Activated CD4-positive, alpha-beta T cell treated with anti-CD3 and anti-CD28 coated beads for 36 hours (primary cell): ENCODE measurements at regions of chr2 and their contacts with region 1.

Region 1: GRCh38 chr2:27890146-27890923 is at the starts of genes BABAM2 and RBKS:
- DNase-seq: peak; percentile 94
- ATAC-seq: peak; percentile 87
- H3K4me3 Mint-ChIP-seq: peak within 1 kb of the TSS; percentile 99
- H3K27ac Mint-ChIP-seq: peak within 1 kb of the TSS; percentile 99
- H3K4me1 Mint-ChIP-seq: peaks cover 58% of the 10 kb centered on the region
- H3K27me3 Mint-ChIP-seq: no peaks in the 10 kb centered on the region
- total RNA-seq, gene BABAM2: 58.4 to 81.1 TPM
- total RNA-seq, gene RBKS: 4.6 to 6.4 TPM

Region 2: DNA sequence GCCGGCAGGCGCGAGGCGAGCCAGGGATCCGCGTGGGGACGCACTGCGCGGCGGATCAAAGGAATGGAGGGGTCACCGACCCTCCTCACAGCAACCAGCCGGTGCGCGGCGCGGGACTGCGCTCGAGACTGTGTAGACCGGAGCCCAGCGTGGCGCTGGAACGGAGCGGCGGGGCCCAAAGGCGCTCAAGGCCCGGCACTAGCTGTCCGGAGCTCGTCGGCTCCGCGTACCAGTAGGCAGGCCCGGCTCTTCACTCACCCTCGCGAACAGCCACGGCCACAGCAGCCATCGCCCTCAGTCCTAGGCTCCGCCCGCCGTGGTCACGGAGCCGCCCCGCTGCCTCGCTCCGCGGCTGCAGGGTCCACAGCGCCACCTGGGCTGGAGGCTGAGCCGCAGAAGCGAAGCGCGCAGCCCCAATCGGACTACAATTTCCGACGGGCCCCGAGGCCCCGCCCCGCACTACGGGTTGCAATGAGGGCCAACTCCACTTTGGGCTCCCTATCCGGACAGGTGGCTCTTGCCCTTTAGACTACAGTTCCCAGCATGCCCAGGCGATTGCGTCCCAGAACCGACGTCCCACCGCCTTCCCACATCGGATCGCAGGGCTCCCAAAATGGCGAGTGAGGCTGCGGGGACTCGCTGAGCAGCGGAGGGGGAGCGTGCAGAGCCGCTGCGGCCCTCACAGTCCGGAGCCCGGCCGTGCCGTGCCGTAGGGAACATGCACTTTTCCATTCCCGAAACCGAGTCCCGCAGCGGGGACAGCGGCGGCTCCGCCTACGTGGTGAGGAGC is 520.1 kb before region 1 on chr2 and contains the starts of genes EIF2B4 and SNX17:
- CTCF ChIA-PET with region 1: no interaction called
- POLR2A ChIA-PET with region 1: no interaction called
- intact Hi-C with region 1: loop called in 1 of 2 experiments (anchors 5 kb)
- DNase-seq: peak; percentile 99
- ATAC-seq: peak; percentile 95
- H3K4me3 Mint-ChIP-seq: peak within 1 kb of the TSS; percentile 90
- H3K27ac Mint-ChIP-seq: peak within 1 kb of the TSS; percentile 95
- H3K4me1 Mint-ChIP-seq: peaks cover 39% of the 10 kb centered on the region
- H3K27me3 Mint-ChIP-seq: no peaks in the 10 kb centered on the region
- total RNA-seq, gene EIF2B4: 31.0 to 39.2 TPM
- total RNA-seq, gene SNX17: 63.9 to 82.1 TPM

Region 3: DNA sequence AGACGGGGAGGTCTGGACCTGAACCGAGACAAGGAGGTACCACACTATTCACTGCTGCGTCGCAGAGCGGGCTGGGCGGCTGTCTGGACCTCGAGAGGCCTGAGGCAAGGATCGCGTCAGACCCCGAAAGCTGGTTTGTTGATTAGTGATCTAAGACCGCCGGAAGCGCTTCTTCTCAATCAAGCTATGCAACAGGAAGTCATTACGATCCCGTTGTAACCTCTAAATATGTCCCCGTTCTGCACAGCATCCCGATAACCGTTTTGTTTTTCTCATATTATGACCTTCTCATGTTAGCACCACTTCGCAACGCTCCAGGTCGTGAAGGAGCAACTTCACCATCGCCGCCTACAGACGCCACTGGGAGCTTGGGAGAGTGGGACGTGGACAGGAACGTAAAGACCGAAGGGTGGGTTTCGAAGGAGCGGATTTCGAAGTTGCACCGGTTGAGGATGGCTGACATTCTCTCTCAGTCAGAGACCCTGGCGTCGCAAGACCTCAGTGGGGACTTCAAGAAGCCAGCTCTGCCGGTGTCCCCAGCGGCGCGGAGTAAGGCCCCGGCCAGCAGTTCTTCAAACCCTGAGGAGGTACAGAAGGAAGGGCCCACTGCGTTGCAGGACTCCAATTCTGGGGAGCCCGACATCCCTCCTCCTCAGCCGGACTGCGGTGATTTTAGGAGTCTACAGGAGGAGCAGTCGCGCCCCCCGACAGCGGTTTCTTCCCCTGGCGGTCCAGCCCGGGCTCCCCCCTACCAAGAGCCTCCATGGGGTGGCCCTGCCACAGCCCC is 226.7 kb before region 1 on chr2 and contains the starts of genes SLC4A1AP and SUPT7L:
- CTCF ChIA-PET with region 1: no interaction called
- POLR2A ChIA-PET with region 1: no interaction called
- intact Hi-C with region 1: loop called in 1 of 2 experiments (anchors 1 kb)
- DNase-seq: peak; percentile 80
- ATAC-seq: peak; percentile 81
- H3K4me3 Mint-ChIP-seq: peak within 1 kb of the TSS; percentile 98
- H3K27ac Mint-ChIP-seq: peak within 1 kb of the TSS; percentile 100
- H3K4me1 Mint-ChIP-seq: peaks cover 42% of the 10 kb centered on the region
- H3K27me3 Mint-ChIP-seq: no peaks in the 10 kb centered on the region
- total RNA-seq, gene SLC4A1AP: 23.8 to 25.3 TPM
- total RNA-seq, gene SUPT7L: 23.7 to 26.1 TPM

Region 4: GRCh38 chr2:27902098-27902497 is 11.8 kb after region 1 on chr2:
- CTCF ChIA-PET with region 1: interaction called, 4 read pairs
- POLR2A ChIA-PET with region 1: interaction called, 6 read pairs
- intact Hi-C with region 1: loop called (anchors 1 kb)
- DNase-seq: no peak
- ATAC-seq: peak; percentile 86
- H3K4me3 Mint-ChIP-seq: no peak overlapping the region
- H3K27ac Mint-ChIP-seq: peak overlapping the region; percentile 79
- H3K4me1 Mint-ChIP-seq: peaks cover 79% of the 10 kb centered on the region
- H3K27me3 Mint-ChIP-seq: no peaks in the 10 kb centered on the region

Region 5: GRCh38 chr2:28032816-28033215 is 142.5 kb after region 1 on chr2:
- CTCF ChIA-PET with region 1: no interaction called
- POLR2A ChIA-PET with region 1: no interaction called
- intact Hi-C with region 1: loop called in 1 of 2 experiments (anchors 1 kb)
- DNase-seq: no peak
- ATAC-seq: peak; percentile 92
- H3K4me3 Mint-ChIP-seq: no peak overlapping the region
- H3K27ac Mint-ChIP-seq: no peak overlapping the region
- H3K4me1 Mint-ChIP-seq: peaks cover 27% of the 10 kb centered on the region
- H3K27me3 Mint-ChIP-seq: no peaks in the 10 kb centered on the region

Region 6: DNA sequence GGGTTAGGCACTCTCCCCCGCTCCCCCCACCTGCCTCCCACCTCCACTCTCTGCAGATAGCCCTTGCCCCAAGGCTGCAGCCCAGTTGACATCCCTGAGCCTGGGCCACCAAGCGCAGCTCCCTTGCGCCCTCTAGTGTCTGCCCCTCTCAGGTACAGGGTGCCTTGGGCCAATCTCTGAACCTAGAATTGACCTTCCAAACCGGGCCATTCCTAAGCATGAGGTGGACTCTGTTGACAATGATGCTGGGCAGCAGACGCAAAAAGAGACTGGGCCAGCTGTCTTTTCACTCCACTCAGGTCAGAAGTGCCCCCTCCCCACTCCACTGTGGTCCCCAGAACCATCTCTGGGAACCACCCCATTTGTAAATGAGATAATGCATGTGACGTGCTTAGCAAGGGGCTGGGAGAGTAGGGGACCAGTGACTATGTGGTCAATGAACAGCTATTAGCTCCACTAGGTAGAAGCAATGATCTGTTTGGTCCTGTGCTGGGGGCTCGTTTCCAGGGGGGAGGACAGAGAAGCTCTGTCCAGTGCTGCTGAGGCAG is 562.3 kb after region 1 on chr2:
- CTCF ChIA-PET with region 1: no interaction called
- POLR2A ChIA-PET with region 1: interaction called, 4 read pairs
- intact Hi-C with region 1: loop called (anchors 2 to 5 kb)
- DNase-seq: peak; percentile 92
- ATAC-seq: peak; percentile 57
- H3K4me3 Mint-ChIP-seq: no peak overlapping the region
- H3K27ac Mint-ChIP-seq: peak overlapping the region; percentile 11
- H3K4me1 Mint-ChIP-seq: peaks cover 40% of the 10 kb centered on the region
- H3K27me3 Mint-ChIP-seq: no peaks in the 10 kb centered on the region

Region 7: DNA sequence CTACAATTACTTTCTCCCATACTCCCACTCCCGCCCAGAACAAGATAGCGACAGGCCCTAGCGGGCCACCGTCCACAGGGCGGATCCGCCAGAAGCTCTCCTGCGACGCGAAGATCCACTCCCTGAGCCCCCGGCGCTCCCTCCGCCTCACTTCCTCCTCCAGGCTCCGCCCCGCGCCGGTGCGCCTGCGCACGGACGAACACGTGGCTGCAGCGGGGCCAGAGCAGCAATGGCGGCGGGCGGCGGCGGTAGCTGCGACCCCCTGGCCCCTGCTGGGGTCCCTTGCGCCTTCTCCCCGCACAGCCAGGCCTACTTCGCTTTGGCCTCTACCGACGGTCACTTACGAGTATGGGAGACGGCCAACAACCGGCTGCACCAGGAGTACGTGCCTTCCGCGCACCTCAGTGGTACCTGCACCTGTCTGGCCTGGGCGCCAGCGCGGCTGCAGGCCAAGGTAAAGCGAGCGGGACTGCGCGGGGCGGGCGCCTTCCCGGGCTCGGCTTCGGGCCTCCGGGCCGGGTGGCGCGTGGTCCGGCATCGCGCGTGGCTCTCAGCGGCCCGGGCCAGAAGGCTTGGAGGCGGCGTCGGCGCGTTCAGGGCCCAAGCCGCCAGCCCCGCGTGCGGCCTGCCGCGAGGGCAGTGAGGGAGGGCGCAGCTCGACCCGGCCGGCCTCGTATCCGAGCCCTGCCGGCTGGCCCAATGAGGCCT is 1004.3 kb after region 1 on chr2 and contains the start of gene WDR43:
- CTCF ChIA-PET with region 1: no interaction called
- POLR2A ChIA-PET with region 1: no interaction called
- intact Hi-C with region 1: loop called in 1 of 2 experiments (anchors 1 kb)
- DNase-seq: peak; percentile 99
- ATAC-seq: peak; percentile 94
- H3K4me3 Mint-ChIP-seq: peak within 1 kb of the TSS; percentile 97
- H3K27ac Mint-ChIP-seq: peak within 1 kb of the TSS; percentile 95
- H3K4me1 Mint-ChIP-seq: peaks cover 32% of the 10 kb centered on the region
- H3K27me3 Mint-ChIP-seq: no peaks in the 10 kb centered on the region
- total RNA-seq, gene WDR43: 109 to 170 TPM